B cell (primary cell): ENCODE measurements at regions of chr1 and their contacts with region 1.

Region 1: GRCh38 chr1:1777950-1778662 is at the start of gene NADK:
- DNase-seq: peak; percentile 88
- ATAC-seq: peak; percentile 26
- H3K4me3 ChIP-seq: peak within 1 kb of the TSS; percentile 61 to 78 (median 70)
- H3K4me3 Mint-ChIP-seq: peak within 1 kb of the TSS; percentile 92
- H3K27ac ChIP-seq: peak within 1 kb of the TSS; percentile 93 to 94
- H3K27ac Mint-ChIP-seq: peak within 1 kb of the TSS; percentile 99
- H3K4me1 ChIP-seq: peaks cover 71 to 81% of the 10 kb centered on the region in 2 donors
- H3K4me1 Mint-ChIP-seq: peaks cover 67% of the 10 kb centered on the region
- H3K27me3 ChIP-seq: no peaks in the 10 kb centered on the region
- H3K27me3 Mint-ChIP-seq: no peaks in the 10 kb centered on the region
- CTCF ChIP-seq: no peak
- total RNA-seq, gene NADK: 179 and 184 TPM in 2 replicates

Region 2: DNA sequence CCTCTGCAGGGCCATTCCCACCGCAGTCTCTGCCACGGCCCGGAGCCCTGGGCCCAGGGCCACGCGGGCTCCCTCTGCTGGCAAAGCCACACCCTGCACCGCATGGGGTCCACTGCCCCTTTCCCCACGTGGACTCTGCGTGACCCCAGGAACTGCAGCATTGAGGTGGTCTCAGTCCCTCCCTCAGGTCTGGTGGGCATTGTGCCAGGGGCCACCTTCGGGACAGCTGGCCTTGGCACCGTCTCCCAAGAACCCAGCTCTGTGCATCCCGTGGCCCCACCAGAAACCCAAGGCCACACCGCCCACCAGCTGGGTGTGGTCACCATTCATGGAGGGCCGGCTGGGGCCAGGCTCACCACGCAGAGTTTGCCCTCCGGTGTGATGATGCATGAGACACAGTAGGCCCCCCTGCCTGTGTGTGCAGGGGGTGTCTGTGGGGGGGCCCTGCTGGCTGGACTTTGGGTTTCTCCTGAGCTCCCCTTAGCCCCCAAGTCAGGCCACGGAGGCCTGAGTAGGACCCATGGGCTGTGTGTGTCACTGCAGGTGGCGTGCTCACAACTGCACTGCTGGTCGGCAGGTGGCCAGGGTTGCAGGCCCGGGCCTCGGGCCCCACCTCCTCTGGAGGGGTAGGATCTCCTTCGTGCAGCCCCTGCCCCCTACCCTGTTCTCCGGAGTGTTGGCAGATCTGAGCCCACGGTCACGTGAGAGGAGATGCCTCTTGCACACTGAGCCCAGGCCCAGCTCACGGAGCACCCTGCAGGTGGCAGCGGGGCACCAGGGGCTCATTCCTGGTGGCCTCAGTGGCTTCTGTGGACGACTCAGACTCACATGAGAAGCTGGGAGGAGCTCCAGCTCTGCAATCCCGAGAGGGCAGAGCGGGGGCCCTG is 336.9 kb before region 1 on chr1:
- CTCF ChIA-PET with region 1: no interaction called
- POLR2A ChIA-PET with region 1: no interaction called
- intact Hi-C with region 1: no loop called
- DNase-seq: peak; percentile 69
- ATAC-seq: peak; percentile 92
- H3K4me3 ChIP-seq: no peak overlapping the region
- H3K4me3 Mint-ChIP-seq: no peak overlapping the region
- H3K27ac ChIP-seq: no peak overlapping the region
- H3K27ac Mint-ChIP-seq: no peak overlapping the region
- H3K4me1 ChIP-seq: peaks cover 9 to 15% of the 10 kb centered on the region in 2 donors
- H3K4me1 Mint-ChIP-seq: peaks cover 6% of the 10 kb centered on the region
- H3K27me3 ChIP-seq: peaks cover 0 to 34% (median 15%) of the 10 kb centered on the region in 4 experiments
- H3K27me3 Mint-ChIP-seq: peaks cover 17% of the 10 kb centered on the region
- CTCF ChIP-seq: peak; percentile 83

Region 3: DNA sequence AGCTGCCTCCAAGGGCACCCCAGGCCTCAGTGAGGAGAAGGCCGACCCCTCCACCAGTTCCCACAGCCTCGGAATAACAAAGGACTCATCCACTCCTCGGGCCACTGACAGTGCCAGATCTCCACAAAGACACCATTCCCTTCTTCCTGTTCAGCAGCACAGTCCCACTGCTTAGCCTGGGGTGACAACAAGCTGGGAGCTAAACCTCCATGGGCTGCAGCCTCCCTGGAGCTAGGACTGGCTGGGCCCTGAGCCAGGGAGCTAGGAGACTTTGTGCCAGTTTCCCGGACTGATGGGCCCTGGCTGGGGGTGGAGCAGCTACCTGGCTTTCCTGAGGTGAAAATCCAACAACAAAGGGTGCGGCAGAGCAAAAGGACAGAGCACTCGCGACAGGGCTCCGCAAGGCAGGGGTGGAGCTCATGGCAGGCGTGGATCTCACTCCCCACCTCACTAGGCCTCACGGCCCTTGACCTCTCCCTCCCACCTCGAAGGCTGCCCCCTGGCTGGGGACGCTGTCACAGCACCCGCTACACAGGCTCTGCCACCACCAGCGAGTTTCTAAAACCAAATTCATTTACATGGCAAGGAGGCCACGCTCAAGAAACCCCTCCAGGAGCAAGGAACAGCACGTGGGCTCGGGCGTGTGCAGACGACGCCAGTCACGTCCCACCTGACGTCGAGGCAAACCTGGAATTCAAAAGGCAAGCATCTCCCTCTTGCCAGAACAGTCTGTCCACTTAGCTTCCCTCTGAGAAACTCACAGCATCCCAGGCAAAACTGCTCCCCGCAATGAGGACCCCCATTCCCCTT is 99.3 kb before region 1 on chr1:
- CTCF ChIA-PET with region 1: interaction called, 3 read pairs
- POLR2A ChIA-PET with region 1: no interaction called
- intact Hi-C with region 1: loop called (anchors 2 kb)
- DNase-seq: peak; percentile 67
- ATAC-seq: peak; percentile 22
- H3K4me3 ChIP-seq: peak overlapping the region in 1 of 5 experiments; percentile 56
- H3K4me3 Mint-ChIP-seq: peak overlapping the region; percentile 86
- H3K27ac ChIP-seq: peak overlapping the region; percentile 74 to 76
- H3K27ac Mint-ChIP-seq: peak overlapping the region; percentile 98
- H3K4me1 ChIP-seq: peaks cover 9 to 22% of the 10 kb centered on the region in 2 donors
- H3K4me1 Mint-ChIP-seq: peaks cover 29% of the 10 kb centered on the region
- H3K27me3 ChIP-seq: no peaks in the 10 kb centered on the region
- H3K27me3 Mint-ChIP-seq: no peaks in the 10 kb centered on the region
- CTCF ChIP-seq: peak; percentile 59

Region 4: GRCh38 chr1:1797731-1798341 is 19.7 kb after region 1 on chr1:
- CTCF ChIA-PET with region 1: interaction called, 7 read pairs
- POLR2A ChIA-PET with region 1: interaction called, 5 read pairs
- intact Hi-C with region 1: loop called (anchors 1 kb)
- DNase-seq: peak; percentile 68
- ATAC-seq: peak; percentile 81
- H3K4me3 ChIP-seq: no peak overlapping the region
- H3K4me3 Mint-ChIP-seq: peak overlapping the region; percentile 40
- H3K27ac ChIP-seq: peak overlapping the region; percentile 40 to 74
- H3K27ac Mint-ChIP-seq: peak overlapping the region; percentile 90
- H3K4me1 ChIP-seq: peaks cover 27 to 40% of the 10 kb centered on the region in 2 donors
- H3K4me1 Mint-ChIP-seq: peaks cover 53% of the 10 kb centered on the region
- H3K27me3 ChIP-seq: no peaks in the 10 kb centered on the region
- H3K27me3 Mint-ChIP-seq: no peaks in the 10 kb centered on the region
- CTCF ChIP-seq: no peak

Region 5: DNA sequence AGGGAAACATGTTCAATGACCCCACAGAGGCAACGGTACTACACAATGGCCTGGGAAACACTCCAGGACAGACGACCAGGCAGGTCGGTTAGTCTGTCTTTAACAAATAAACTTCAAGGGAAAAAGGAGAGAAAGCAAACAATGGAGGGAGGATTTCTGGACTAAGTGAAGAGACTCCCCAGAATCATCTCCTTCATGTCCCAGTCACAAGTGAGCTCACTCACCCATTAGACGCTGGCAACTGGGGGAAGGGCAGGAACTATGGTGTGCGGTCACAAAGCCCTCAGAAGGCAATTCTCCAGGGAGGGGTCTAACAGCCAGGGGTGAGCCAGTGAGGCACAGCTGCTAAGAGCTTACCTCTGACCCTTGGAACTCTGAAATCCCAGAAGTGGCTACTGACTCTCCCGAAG is 55.8 kb after region 1 on chr1:
- CTCF ChIA-PET with region 1: interaction called, 4 read pairs
- POLR2A ChIA-PET with region 1: interaction called, 5 read pairs
- intact Hi-C with region 1: loop called (anchors 2 kb)
- DNase-seq: peak; percentile 80
- ATAC-seq: peak; percentile 91
- H3K4me3 ChIP-seq: peak overlapping the region in 4 of 5 experiments; percentile 5 to 31 (median 14)
- H3K4me3 Mint-ChIP-seq: peak overlapping the region; percentile 78
- H3K27ac ChIP-seq: peak overlapping the region; percentile 42 to 90
- H3K27ac Mint-ChIP-seq: peak overlapping the region; percentile 87
- H3K4me1 ChIP-seq: peaks cover 42 to 46% of the 10 kb centered on the region in 2 donors
- H3K4me1 Mint-ChIP-seq: peaks cover 48% of the 10 kb centered on the region
- H3K27me3 ChIP-seq: no peaks in the 10 kb centered on the region
- H3K27me3 Mint-ChIP-seq: no peaks in the 10 kb centered on the region
- CTCF ChIP-seq: no peak

Region 6: DNA sequence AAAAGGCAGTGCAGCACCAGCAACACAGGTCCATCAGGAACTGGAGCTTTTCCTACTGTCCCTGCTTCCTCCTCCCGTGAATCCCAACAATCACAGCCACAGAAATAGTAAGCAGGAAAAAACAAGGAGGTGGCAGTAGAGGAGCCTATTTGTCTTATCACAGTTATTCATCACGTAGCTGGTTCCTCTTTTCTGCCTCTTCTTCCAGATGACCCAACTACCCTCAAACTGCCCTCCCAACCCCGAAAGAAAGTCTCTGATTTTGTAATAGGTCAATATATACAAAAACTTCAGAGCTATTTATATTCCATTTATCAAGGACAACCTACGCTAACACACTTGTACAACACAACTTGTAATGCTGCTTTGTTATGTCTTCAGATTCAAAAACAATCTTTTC is 91.4 kb after region 1 on chr1:
- CTCF ChIA-PET with region 1: no interaction called
- POLR2A ChIA-PET with region 1: interaction called, 10 read pairs
- intact Hi-C with region 1: no loop called
- DNase-seq: peak; percentile 59
- ATAC-seq: peak; percentile 52
- H3K4me3 ChIP-seq: no peak overlapping the region
- H3K4me3 Mint-ChIP-seq: peak overlapping the region; percentile 55
- H3K27ac ChIP-seq: peak overlapping the region; percentile 35 to 57
- H3K27ac Mint-ChIP-seq: peak overlapping the region; percentile 90
- H3K4me1 ChIP-seq: peaks cover 55 to 75% of the 10 kb centered on the region in 2 donors
- H3K4me1 Mint-ChIP-seq: peaks cover 68% of the 10 kb centered on the region
- H3K27me3 ChIP-seq: no peaks in the 10 kb centered on the region
- H3K27me3 Mint-ChIP-seq: no peaks in the 10 kb centered on the region
- CTCF ChIP-seq: no peak

Region 7: DNA sequence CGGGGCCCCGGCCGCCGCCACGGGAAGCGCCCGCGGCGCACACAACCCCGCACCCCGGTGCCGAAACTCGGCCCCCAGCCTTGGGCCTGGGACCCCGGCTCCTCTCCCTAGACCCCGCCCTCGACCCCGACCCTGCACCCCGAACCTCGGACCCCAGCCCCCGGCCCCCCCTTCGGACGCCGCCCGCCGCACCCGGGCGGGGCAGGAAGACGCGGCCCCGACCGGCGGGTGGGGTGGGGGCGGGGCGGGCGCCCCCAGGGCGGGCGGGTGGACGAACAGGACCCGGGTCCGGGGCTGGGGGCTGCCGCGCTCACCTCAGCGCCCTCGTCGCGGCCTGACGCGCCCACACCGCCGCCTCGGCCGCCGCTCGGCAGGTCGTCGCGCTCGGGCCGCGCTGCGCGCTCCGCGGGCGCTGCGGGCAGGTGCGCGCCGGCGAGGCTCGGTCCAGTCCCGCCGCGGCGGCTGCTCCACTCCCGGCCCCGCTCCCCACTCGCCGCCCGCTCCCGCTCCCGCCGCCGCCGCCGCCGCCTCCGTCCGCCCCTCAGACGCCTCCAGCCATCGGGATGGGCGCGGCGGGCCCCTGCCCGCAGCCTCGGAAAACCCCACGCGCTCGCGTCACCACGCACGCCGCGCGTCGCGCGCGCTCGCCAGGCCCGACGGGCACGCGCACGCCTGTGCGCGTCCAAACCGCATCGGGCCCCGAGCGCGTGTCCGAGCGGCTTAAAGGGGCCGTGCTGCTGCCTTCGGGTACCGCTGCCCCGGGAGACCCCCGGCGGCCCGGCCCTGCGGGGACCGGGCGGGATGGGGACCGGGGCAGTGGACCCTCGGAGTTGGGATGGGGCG is 112.6 kb after region 1 on chr1 and contains the start of gene GNB1:
- CTCF ChIA-PET with region 1: interaction called, 7 read pairs
- POLR2A ChIA-PET with region 1: interaction called, 6 read pairs
- intact Hi-C with region 1: loop called (anchors 1 kb)
- DNase-seq: peak; percentile 98
- ATAC-seq: peak; percentile 60
- H3K4me3 ChIP-seq: peak within 1 kb of the TSS; percentile 63 to 88 (median 79)
- H3K4me3 Mint-ChIP-seq: peak within 1 kb of the TSS; percentile 91
- H3K27ac ChIP-seq: peak within 1 kb of the TSS; percentile 72 to 86
- H3K27ac Mint-ChIP-seq: peak within 1 kb of the TSS; percentile 96
- H3K4me1 ChIP-seq: peaks cover 53 to 74% of the 10 kb centered on the region in 2 donors
- H3K4me1 Mint-ChIP-seq: peaks cover 60% of the 10 kb centered on the region
- H3K27me3 ChIP-seq: no peaks in the 10 kb centered on the region
- H3K27me3 Mint-ChIP-seq: no peaks in the 10 kb centered on the region
- CTCF ChIP-seq: no peak
- total RNA-seq, gene GNB1: 249 and 291 TPM in 2 replicates

Region 8: DNA sequence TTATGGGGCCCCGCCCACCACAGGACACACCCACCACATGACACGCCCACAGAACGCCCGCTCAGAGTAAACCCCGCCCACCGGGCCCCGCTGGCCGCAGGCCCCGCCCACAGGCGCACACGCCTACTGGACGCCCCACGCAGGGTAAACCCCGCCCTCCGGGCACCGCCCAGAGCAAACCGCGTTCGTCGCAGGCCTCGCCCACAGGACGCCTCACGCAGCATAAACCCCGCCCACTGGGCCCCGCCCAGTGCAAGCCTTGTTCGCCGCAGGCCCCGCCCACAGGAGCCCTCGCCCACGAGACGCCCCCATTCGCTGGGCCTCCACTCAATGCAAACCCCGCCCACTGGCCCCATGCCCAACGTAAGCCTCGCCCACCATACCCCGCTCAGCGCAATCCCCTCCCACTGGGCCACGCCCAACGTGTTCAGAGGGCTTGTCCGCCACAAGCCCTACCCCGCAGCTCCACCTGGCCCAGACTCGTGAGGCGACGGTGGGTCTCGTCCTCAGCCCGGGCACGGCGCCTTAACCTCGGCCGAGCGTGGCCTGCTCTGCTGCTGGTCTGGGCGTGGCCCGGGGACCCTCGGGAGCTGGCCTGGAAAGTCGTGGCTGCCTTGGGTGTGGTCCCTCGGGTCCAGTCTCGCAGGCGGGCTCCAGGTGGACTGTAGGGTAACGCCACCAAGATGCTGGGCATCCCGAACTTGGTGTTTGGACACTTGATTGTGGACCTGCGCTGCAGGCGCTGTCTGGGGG is 141.4 kb after region 1 on chr1:
- CTCF ChIA-PET with region 1: no interaction called
- POLR2A ChIA-PET with region 1: no interaction called
- intact Hi-C with region 1: loop called (anchors 1 kb)
- DNase-seq: peak; percentile 100
- ATAC-seq: peak; percentile 88
- H3K4me3 ChIP-seq: peak overlapping the region in 4 of 5 experiments; percentile 37 to 67 (median 60)
- H3K4me3 Mint-ChIP-seq: peak overlapping the region; percentile 79
- H3K27ac ChIP-seq: peak overlapping the region in 1 of 2 donors; percentile 51
- H3K27ac Mint-ChIP-seq: peak overlapping the region; percentile 62
- H3K4me1 ChIP-seq: peaks cover 12 to 22% of the 10 kb centered on the region in 2 donors
- H3K4me1 Mint-ChIP-seq: peaks cover 4% of the 10 kb centered on the region
- H3K27me3 ChIP-seq: peaks cover 0 to 18% (median 0%) of the 10 kb centered on the region in 4 experiments
- H3K27me3 Mint-ChIP-seq: peaks cover under 1% of the 10 kb centered on the region
- CTCF ChIP-seq: no peak